HepG2 (cell line): ENCODE measurements at regions of chr3 and their contacts with region 1.

Region 1: GRCh38 chr3:196486263-196486662 is 17.3 kb downstream of the RNF168 start:
- DNase-seq: no peak
- ATAC-seq: peak; percentile 65
- H3K4me3 ChIP-seq: no peak overlapping the region
- H3K27ac ChIP-seq: no peak overlapping the region
- H3K4me1 ChIP-seq: peaks cover 23% of the 10 kb centered on the region
- H3K27me3 ChIP-seq: no peaks in the 10 kb centered on the region; a peak in 1 of 5 replicates
- CTCF ChIP-seq: peak; percentile 69
- EP300 ChIP-seq: no peak
- POLR2A ChIP-seq: no peak
- RAD21 ChIP-seq: no peak; the same call in 1 of the 2 replicates

Region 2: GRCh38 chr3:196423044-196423781 is 63.0 kb before region 1 on chr3:
- CTCF ChIA-PET with region 1: no interaction called
- POLR2A ChIA-PET with region 1: no interaction called
- in situ Hi-C with region 1: no loop called
- intact Hi-C with region 1: no loop called
- DNase-seq: no peak
- ATAC-seq: peak; percentile 53
- H3K4me3 ChIP-seq: no peak overlapping the region
- H3K27ac ChIP-seq: no peak overlapping the region
- H3K4me1 ChIP-seq: no peaks in the 10 kb centered on the region
- H3K27me3 ChIP-seq: no peaks in the 10 kb centered on the region
- CTCF ChIP-seq: no peak
- EP300 ChIP-seq: no peak
- POLR2A ChIP-seq: no peak
- RAD21 ChIP-seq: no peak

Region 3: DNA sequence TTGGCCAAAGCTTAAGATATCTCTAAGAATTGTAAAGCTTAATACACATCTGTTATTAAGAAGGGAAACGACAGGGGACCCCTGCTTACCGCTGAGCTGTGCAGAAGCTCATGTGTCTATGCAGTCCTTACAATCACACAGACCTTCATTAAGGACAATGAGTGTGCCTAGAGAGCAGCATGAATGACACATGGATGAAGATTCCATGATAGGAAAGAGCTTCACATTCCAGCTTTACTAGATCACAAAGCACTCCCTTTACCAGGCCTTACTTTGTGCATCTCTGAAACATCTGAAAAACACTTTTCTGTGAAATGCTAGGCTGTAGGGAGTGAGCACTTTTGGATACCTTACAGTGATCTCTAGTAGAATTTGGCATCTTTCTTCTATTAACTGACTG is 14.7 kb before region 1 on chr3:
- CTCF ChIA-PET with region 1: no interaction called
- POLR2A ChIA-PET with region 1: no interaction called
- in situ Hi-C with region 1: no loop called
- intact Hi-C with region 1: no loop called
- DNase-seq: no peak
- ATAC-seq: no peak
- H3K4me3 ChIP-seq: no peak overlapping the region
- H3K27ac ChIP-seq: no peak overlapping the region
- H3K4me1 ChIP-seq: no peaks in the 10 kb centered on the region
- H3K27me3 ChIP-seq: no peaks in the 10 kb centered on the region
- CTCF ChIP-seq: no peak
- EP300 ChIP-seq: no peak
- POLR2A ChIP-seq: no peak
- RAD21 ChIP-seq: no peak

Region 4: GRCh38 chr3:196501316-196502044 is 15.2 kb after region 1 on chr3:
- CTCF ChIA-PET with region 1: no interaction called
- POLR2A ChIA-PET with region 1: interaction called, 4 read pairs
- in situ Hi-C with region 1: no loop called
- intact Hi-C with region 1: loop called (anchors 1 kb)
- DNase-seq: no peak
- ATAC-seq: no peak
- H3K4me3 ChIP-seq: peak overlapping the region; percentile 90 to 99 (median 99)
- H3K27ac ChIP-seq: peak overlapping the region; percentile 90
- H3K4me1 ChIP-seq: peaks cover 52% of the 10 kb centered on the region
- H3K27me3 ChIP-seq: no peaks in the 10 kb centered on the region; a peak in 1 of 5 replicates
- CTCF ChIP-seq: no peak
- EP300 ChIP-seq: no peak
- POLR2A ChIP-seq: no peak
- RAD21 ChIP-seq: no peak